ENCODE measurements at regions of chr7 and their contacts with region 1.

Region 1: GRCh38 chr7:139340037-139340807 is 915 bp upstream of the FMC1 start:
- DNase-seq: peak; percentile 93 to 100 (median 99)
- ATAC-seq: peak; percentile 89
- H3K4me3 ChIP-seq: peak overlapping the region; percentile 95
- H3K4me3 Mint-ChIP-seq: peak overlapping the region; percentile 93 to 100 (median 98)
- H3K27ac ChIP-seq: peak overlapping the region; percentile 100
- H3K27ac Mint-ChIP-seq: peak overlapping the region; percentile 98 to 100 (median 100)
- H3K4me1 ChIP-seq: peaks cover 11 to 13% of the 10 kb centered on the region in 2 donors
- H3K4me1 Mint-ChIP-seq: peaks cover 12 to 49% (median 38%) of the 10 kb centered on the region in 7 donors
- H3K27me3 ChIP-seq: no peaks in the 10 kb centered on the region
- H3K27me3 Mint-ChIP-seq: peaks cover 0 to 9% (median 5%) of the 10 kb centered on the region in 5 donors

Region 2: DNA sequence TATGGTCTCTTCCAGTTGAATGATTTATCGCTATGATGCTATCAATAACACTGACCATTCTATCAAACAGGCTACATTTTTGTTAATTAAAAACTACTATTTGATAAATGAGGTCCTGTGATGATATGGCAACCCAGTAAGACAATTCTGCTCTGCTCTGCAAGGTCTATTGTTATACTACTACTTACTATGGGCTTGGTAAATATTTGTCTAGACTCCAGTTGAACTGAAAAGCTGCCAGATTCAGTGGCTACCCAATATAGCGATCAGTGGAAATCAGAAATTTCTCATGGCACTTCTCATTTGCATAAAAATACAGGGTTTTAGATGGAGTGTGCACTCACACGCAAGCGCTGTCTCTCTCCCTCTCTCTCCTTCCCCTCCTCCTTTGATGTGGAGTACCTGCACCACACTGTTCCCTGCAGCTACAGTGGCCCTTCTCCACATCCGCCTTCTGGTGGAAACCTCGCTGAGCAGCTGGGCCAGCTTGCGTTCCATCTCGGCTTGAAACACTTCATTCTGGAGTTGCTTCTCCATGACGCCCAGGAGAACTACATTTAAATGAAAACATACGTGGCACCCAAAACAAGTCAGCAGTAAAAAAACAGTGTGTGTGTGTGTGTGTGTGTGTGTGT is 436.9 kb before region 1 on chr7:
- CTCF ChIA-PET with region 1: no interaction called
- POLR2A ChIA-PET with region 1: no interaction called
- intact Hi-C with region 1: loop called (anchors 2 to 5 kb)
- DNase-seq: peak; percentile 29 to 94 (median 90)
- ATAC-seq: peak; percentile 98
- H3K4me3 ChIP-seq: peak overlapping the region; percentile 38
- H3K4me3 Mint-ChIP-seq: peak overlapping the region; percentile 69 to 94 (median 82)
- H3K27ac ChIP-seq: no peak overlapping the region
- H3K27ac Mint-ChIP-seq: peak overlapping the region; percentile 17 to 97 (median 87)
- H3K4me1 ChIP-seq: peaks cover 20 to 36% of the 10 kb centered on the region in 2 donors
- H3K4me1 Mint-ChIP-seq: peaks cover 25 to 66% (median 56%) of the 10 kb centered on the region in 7 donors
- H3K27me3 ChIP-seq: no peaks in the 10 kb centered on the region
- H3K27me3 Mint-ChIP-seq: peaks cover 0 to 59% (median 5%) of the 10 kb centered on the region in 5 donors

Region 3: GRCh38 chr7:139133335-139134139 is 206.7 kb before region 1 on chr7:
- CTCF ChIA-PET with region 1: no interaction called
- POLR2A ChIA-PET with region 1: no interaction called
- intact Hi-C with region 1: loop called (anchors 1 kb)
- DNase-seq: peak; percentile 68 to 86 (median 83)
- ATAC-seq: peak; percentile 98
- H3K4me3 ChIP-seq: peak overlapping the region; percentile 86
- H3K4me3 Mint-ChIP-seq: peak overlapping the region; percentile 85 to 96 (median 90)
- H3K27ac ChIP-seq: peak overlapping the region; percentile 72
- H3K27ac Mint-ChIP-seq: peak overlapping the region; percentile 76 to 95 (median 85)
- H3K4me1 ChIP-seq: peaks cover 0 to 10% of the 10 kb centered on the region in 2 donors
- H3K4me1 Mint-ChIP-seq: peaks cover 11 to 33% (median 16%) of the 10 kb centered on the region in 7 donors
- H3K27me3 ChIP-seq: no peaks in the 10 kb centered on the region
- H3K27me3 Mint-ChIP-seq: peaks cover 0 to 5% (median 0%) of the 10 kb centered on the region in 5 donors

Region 4: DNA sequence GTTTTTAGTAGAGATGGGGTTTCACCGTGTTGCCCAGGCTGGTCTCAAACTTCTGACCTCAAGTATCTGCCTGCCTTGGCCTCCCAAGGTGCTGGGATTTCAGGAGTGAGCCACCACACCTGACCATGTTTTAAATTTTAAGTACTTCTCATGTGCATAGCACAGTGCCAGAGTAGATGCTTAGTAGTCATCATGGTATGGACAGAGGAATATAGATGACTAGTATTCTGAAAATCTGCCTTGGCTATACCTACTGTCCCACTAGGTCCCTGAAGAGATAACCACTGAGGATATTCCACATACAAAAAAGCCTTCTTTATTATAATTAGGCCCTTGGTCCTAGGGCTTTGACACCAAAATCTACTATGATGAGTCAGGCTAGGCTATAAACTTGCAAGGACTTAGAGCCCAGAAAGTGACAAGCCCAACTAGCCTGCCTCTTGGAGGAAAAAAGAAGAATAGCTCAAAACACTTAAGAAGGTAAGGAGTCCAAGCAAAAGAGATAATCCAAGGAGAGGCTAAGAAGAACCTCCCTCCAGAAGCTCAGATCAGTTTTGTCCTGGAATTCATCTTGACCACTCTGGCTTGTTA is 53.5 kb after region 1 on chr7:
- CTCF ChIA-PET with region 1: interaction called, 3 read pairs
- POLR2A ChIA-PET with region 1: interaction called, 4 read pairs
- intact Hi-C with region 1: loop called in 1 of 2 experiments (anchors 1 kb)
- DNase-seq: no peak
- ATAC-seq: no peak
- H3K4me3 ChIP-seq: no peak overlapping the region
- H3K4me3 Mint-ChIP-seq: peak overlapping the region in 9 of 10 donors; percentile 4 to 84 (median 53)
- H3K27ac ChIP-seq: peak overlapping the region; percentile 10
- H3K27ac Mint-ChIP-seq: peak overlapping the region in 8 of 9 donors; percentile 2 to 82 (median 56)
- H3K4me1 ChIP-seq: peaks cover 10 to 19% of the 10 kb centered on the region in 2 donors
- H3K4me1 Mint-ChIP-seq: peaks cover 19 to 77% (median 51%) of the 10 kb centered on the region in 7 donors
- H3K27me3 ChIP-seq: no peaks in the 10 kb centered on the region
- H3K27me3 Mint-ChIP-seq: no peaks in the 10 kb centered on the region

Region 5: GRCh38 chr7:139777948-139778841 is 438.0 kb after region 1 on chr7 and contains the start of gene HIPK2:
- CTCF ChIA-PET with region 1: no interaction called
- POLR2A ChIA-PET with region 1: no interaction called
- intact Hi-C with region 1: loop called in 1 of 2 experiments (anchors 10 kb)
- DNase-seq: peak; percentile 54 to 75 (median 67)
- ATAC-seq: peak; percentile 79
- H3K4me3 ChIP-seq: peak within 1 kb of the TSS; percentile 85
- H3K4me3 Mint-ChIP-seq: peak within 1 kb of the TSS; percentile 94 to 100 (median 98)
- H3K27ac ChIP-seq: peak within 1 kb of the TSS; percentile 89
- H3K27ac Mint-ChIP-seq: peak within 1 kb of the TSS; percentile 95 to 98 (median 97)
- H3K4me1 ChIP-seq: peaks cover 4 to 26% of the 10 kb centered on the region in 2 donors
- H3K4me1 Mint-ChIP-seq: peaks cover 41 to 53% (median 49%) of the 10 kb centered on the region in 7 donors
- H3K27me3 ChIP-seq: no peaks in the 10 kb centered on the region
- H3K27me3 Mint-ChIP-seq: peaks cover 0 to 24% (median 5%) of the 10 kb centered on the region in 5 donors
- total RNA-seq, gene HIPK2: 27.3 to 44.0 (median 37.3) TPM

Region 6: DNA sequence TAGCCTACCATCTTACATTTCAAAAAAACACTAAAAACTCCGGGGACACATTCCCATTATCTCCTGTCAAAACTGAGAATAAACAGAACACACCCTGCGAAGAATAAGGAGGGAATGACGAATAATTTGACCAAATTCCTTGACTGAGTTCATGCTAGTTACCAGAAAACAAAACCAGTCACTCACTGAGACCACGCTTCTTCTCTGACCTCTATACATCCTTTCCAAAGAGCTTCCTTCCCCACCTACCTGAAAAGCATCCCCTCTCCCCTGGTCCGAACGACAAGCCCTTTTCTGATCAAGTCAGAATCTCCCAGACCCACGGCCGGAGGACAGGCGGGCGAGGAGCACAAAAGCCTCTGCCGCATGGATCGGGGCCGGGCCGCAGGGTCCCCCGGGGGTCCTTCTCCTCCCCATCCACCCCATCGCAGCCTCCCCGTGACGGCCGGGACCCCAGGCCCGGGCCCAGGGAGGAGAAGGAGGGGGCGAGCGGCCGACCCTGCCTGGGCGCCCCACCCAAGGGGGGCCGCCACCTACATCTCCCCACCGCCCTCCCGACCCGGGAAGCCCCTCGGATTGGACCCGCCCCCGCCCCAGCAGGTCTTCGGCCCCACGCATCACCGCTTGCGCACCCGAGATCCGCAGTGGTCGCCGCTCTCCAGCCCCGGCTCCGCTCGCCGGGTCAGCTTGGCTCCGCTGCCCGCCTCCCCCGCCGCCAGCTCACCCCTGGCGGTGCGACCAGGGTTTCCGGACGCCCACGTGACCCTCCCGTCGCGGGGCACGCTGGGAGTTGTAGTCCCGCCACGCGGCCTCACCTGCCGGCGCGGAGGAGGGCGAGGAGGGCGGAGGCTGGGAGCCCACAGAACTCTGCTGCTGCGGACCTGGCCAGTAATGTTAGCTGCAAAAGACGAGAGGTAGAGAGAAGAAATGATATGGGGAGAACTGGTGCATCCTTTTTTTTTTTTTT is 1057.8 kb after region 1 on chr7 and contains the start of gene SLC37A3:
- CTCF ChIA-PET with region 1: no interaction called
- POLR2A ChIA-PET with region 1: no interaction called
- intact Hi-C with region 1: loop called in 1 of 2 experiments (anchors 10 kb)
- DNase-seq: peak; percentile 74 to 93 (median 80)
- ATAC-seq: peak; percentile 97
- H3K4me3 ChIP-seq: peak within 1 kb of the TSS; percentile 67
- H3K4me3 Mint-ChIP-seq: peak within 1 kb of the TSS; percentile 79 to 95 (median 90)
- H3K27ac ChIP-seq: peak within 1 kb of the TSS; percentile 84
- H3K27ac Mint-ChIP-seq: peak within 1 kb of the TSS; percentile 14 to 92 (median 85)
- H3K4me1 ChIP-seq: peaks cover 0 to 15% of the 10 kb centered on the region in 2 donors
- H3K4me1 Mint-ChIP-seq: peaks cover 22 to 41% (median 31%) of the 10 kb centered on the region in 7 donors
- H3K27me3 ChIP-seq: no peaks in the 10 kb centered on the region
- H3K27me3 Mint-ChIP-seq: no peaks in the 10 kb centered on the region
- total RNA-seq, gene SLC37A3: 26.8 to 72.7 (median 39.4) TPM